ENCODE measurements at regions of chrX and their contacts with region 1.

Region 1: GRCh38 chrX:31279359-31279758 is 207.5 kb upstream of the FTHL17 start:
- DNase-seq: peak; percentile 18
- ATAC-seq: peak; percentile 93
- H3K4me3 ChIP-seq: no peak overlapping the region
- H3K27ac ChIP-seq: no peak overlapping the region
- H3K4me1 ChIP-seq: no peaks in the 10 kb centered on the region
- H3K27me3 ChIP-seq: no peaks in the 10 kb centered on the region
- CTCF ChIP-seq: peak; percentile 64
- EP300 ChIP-seq: no peak
- POLR2A ChIP-seq: no peak
- RAD21 ChIP-seq: 0 out of 2 replicates have a peak, but pooled peaks have one; percentile 18

Region 2: DNA sequence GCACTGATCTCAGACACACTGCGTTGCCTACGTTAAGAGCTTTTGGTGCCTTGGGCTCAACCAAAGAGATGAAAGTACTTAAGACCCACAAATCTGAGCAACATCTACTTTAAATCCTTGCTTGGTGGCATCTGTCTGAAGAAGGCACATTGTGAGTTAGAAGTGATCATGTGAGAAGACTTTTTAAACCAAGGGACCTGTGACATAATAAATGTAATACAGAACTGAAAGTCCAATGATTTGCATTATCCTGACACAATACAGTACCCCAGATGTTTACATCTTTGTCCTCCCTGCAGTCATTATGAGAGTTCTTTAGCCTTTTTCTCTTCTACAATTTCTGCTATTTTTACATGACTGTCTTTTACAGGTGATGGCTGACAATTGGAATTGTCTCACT is 110.8 kb before region 1 on chrX:
- CTCF ChIA-PET with region 1: no interaction called
- POLR2A ChIA-PET with region 1: no interaction called
- in situ Hi-C with region 1: no loop called
- intact Hi-C with region 1: no loop called
- DNase-seq: no peak
- ATAC-seq: no peak
- H3K4me3 ChIP-seq: no peak overlapping the region
- H3K27ac ChIP-seq: no peak overlapping the region
- H3K4me1 ChIP-seq: peaks cover 22% of the 10 kb centered on the region
- H3K27me3 ChIP-seq: no peaks in the 10 kb centered on the region
- CTCF ChIP-seq: no peak
- EP300 ChIP-seq: no peak
- POLR2A ChIP-seq: no peak
- RAD21 ChIP-seq: no peak

Region 3: DNA sequence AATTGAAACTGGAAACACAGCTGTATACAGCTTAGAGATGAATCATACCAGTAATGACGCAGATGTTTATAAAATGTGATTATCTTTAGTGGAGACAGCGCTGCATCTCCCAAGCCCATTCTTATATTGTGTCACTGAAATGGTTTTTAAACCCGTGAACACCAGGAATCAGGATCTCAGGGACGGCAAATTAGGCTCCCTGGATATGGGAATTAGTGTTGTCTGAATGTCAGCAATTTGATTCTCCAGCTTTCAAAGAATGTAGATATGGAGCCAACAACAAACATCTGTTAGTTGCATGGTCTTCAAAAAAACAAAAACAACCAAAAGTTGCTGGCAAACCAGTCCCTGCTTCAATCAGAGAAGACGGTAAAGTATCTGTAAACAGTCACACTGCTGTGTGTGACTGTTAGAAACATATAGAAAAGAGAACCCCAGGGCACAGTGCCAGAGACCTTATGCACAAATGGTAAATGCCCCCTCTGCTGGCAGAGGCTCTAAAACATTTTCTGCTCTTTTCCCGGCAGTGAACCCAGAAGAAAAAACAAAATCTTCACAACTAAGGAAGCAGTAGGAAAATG is 144.3 kb after region 1 on chrX:
- CTCF ChIA-PET with region 1: interaction called, 10 read pairs
- POLR2A ChIA-PET with region 1: no interaction called
- in situ Hi-C with region 1: no loop called
- intact Hi-C with region 1: loop called (anchors 1 kb)
- DNase-seq: peak; percentile 15
- ATAC-seq: peak; percentile 65
- H3K4me3 ChIP-seq: no peak overlapping the region
- H3K27ac ChIP-seq: no peak overlapping the region
- H3K4me1 ChIP-seq: no peaks in the 10 kb centered on the region
- H3K27me3 ChIP-seq: no peaks in the 10 kb centered on the region
- CTCF ChIP-seq: peak; percentile 52
- EP300 ChIP-seq: no peak
- POLR2A ChIP-seq: no peak
- RAD21 ChIP-seq: no peak

Region 4: DNA sequence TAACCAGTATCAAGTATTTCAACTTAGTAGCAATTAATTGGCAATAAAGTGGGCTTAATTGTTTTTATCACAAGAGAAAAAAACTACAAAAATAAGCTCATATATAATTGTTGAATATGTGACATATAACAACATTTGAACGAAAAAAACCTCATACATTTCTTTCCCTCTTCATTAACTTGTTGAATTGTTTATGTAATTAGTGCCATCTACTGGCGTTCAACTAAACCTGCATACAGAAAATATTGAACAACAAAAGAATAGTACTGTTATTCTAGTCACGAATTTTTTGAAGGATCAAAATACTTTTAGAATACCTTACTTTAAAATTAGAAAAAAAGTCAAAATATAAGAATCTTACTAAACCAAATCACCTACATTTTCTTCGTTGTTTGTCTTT is 379.0 kb after region 1 on chrX:
- CTCF ChIA-PET with region 1: no interaction called
- POLR2A ChIA-PET with region 1: no interaction called
- in situ Hi-C with region 1: no loop called
- intact Hi-C with region 1: loop called (anchors 5 kb)
- DNase-seq: peak; percentile 1
- ATAC-seq: no peak
- H3K4me3 ChIP-seq: no peak overlapping the region
- H3K27ac ChIP-seq: no peak overlapping the region
- H3K4me1 ChIP-seq: no peaks in the 10 kb centered on the region
- H3K27me3 ChIP-seq: no peaks in the 10 kb centered on the region
- CTCF ChIP-seq: peak; percentile 40
- EP300 ChIP-seq: no peak
- POLR2A ChIP-seq: no peak
- RAD21 ChIP-seq: no peak

Region 5: DNA sequence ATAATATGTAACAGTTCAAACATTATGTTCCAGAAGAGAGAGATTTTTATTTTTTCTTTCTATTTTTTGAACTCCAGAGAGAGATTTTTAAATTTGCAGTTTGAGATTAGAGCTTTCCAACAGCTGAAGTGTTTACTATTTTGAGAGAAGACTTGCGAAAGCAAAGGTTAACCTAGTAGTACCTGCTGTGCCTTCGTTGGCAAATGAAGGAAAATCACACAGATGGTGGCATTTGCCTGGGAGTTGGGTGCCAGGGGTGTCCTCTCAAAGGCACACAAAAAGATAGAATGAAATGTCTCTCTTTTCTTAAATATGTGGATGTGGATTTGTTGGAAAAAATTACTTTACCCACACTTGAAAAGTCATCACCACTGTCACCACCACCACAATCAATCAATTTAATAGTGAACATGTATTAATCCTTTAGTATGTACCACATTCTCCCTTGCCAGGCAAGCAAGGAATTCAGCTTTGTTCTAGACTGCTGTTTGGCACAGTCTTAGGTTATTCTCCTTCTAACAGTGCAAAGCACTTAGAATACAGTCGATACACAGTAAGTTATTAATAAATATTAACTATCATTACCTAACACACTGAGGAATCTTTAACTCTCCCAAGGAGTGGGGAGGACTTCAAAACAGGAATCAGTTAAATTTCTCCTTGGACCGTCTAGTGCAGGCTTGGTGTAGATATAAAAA is 630.6 kb after region 1 on chrX:
- CTCF ChIA-PET with region 1: no interaction called
- POLR2A ChIA-PET with region 1: no interaction called
- in situ Hi-C with region 1: no loop called
- intact Hi-C with region 1: no loop called
- DNase-seq: no peak
- ATAC-seq: no peak
- H3K4me3 ChIP-seq: no peak overlapping the region
- H3K27ac ChIP-seq: no peak overlapping the region
- H3K4me1 ChIP-seq: no peaks in the 10 kb centered on the region
- H3K27me3 ChIP-seq: no peaks in the 10 kb centered on the region
- CTCF ChIP-seq: no peak
- EP300 ChIP-seq: no peak
- POLR2A ChIP-seq: no peak
- RAD21 ChIP-seq: no peak